Cardiac septum (tissue), 1 donor: ENCODE measurements at regions of chr18 and their contacts with region 1.

Region 1: DNA sequence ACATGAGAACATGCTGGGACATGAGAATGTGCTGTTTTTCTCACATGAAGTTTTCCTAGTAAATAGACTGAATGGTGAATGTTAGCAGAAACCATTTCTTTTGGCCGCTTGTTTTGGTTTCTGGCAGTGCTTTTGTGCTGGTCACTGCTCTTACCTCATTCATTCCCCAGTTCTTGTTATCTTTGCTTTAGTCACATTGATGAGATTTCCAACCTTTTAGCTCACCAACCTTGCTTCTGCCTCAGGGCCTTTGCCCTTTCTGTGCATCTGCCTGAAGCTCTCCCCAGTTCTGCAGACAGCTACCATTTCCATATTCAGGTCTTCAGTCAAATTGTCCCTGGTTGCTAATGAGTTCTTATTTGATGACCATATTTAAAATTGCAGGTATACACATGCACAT is 91.6 kb downstream of the PTPRM start:
- DNase-seq: no peak

Region 2: GRCh38 chr18:7524786-7525185 is 133.9 kb before region 1 on chr18:
- intact Hi-C with region 1: no loop called
- DNase-seq: no peak

Region 3: DNA sequence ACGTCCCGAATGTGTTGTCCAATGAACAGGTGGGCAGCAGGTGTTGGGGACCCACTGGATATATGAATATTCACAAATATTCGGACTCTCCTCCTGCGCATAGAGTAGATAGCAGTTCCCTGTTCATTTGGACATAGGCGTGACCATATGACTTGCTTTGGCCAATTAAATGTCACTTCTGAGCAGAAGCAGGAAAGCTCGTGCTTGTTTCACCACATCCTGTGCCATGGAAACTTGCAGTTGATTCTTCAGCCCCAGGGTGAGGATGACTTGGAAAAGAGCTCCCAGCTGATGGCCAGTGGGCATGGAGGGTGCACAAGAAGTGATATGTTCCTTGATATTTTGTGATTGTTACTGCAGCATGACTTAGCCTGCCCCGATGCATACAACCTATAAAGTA is 39.0 kb before region 1 on chr18:
- intact Hi-C with region 1: loop called (anchors 5 kb)
- DNase-seq: no peak